Lower leg skin (tissue), 4 donors: ENCODE measurements at regions of chr19 and their contacts with region 1.

Region 1: DNA sequence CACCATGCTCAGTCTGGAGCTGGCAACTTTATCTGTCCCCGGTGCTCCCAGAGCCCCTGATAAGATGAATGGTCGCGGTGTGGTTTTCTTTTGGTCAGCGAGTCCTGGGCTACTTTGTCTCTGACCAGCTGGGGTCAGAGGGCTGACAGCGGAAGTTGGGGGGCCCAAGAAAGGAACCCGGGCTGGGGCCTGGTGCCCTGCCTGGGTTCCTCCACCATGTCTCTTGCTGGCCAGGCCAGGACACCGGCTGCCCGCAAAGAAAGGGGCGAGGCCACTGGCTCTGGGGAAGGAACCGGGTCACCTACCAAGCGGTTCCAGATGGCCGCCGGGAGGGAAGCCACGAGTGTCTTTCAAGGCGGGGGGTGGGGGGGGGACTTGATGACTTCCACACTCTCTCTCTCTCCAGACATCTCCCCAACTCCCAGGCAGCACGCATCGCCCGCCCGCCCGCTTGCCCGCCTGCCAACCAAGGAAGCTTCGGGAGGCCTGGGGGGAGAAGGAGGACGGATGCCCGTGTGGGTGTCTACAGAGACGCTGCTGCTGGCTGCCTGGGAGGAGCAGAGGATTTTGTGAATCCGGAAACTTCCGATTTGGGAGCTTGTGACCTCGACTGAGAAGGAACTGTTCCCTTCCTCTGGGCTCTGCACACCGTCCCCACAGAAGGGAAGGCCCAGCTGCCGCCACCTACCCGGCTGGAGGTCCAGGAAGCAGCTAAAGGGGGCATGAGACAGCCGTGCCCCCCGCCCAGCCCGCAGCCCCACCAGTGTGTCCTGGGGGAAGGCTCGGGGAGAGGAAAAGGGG is 1.1 kb downstream of the PIP5K1C start:
- DNase-seq: peak; percentile 49 to 85
- H3K4me3 ChIP-seq: peak overlapping the region; percentile 81
- CTCF ChIP-seq: no peak
- POLR2A ChIP-seq: no peak

Region 2: GRCh38 chr19:3660493-3661219 is 38.5 kb before region 1 on chr19:
- intact Hi-C with region 1: loop called (anchors 5 kb)
- DNase-seq: no peak
- H3K4me3 ChIP-seq: no peak overlapping the region
- CTCF ChIP-seq: no peak
- POLR2A ChIP-seq: no peak